Tibial artery (tissue), 4 donors: ENCODE measurements at regions of chr14 and their contacts with region 1.

Region 1: GRCh38 chr14:79534703-79535353 is 676.5 kb downstream of the DIO2 start:
- DNase-seq: no peak
- H3K4me3 ChIP-seq: no peak overlapping the region
- H3K27ac ChIP-seq: no peak overlapping the region
- H3K4me1 ChIP-seq: no peaks in the 10 kb centered on the region
- H3K27me3 ChIP-seq: no peaks in the 10 kb centered on the region
- CTCF ChIP-seq: no peak

Region 2: GRCh38 chr14:79256380-79256779 is 278.4 kb before region 1 on chr14:
- intact Hi-C with region 1: loop called (anchors 5 kb)
- DNase-seq: no peak
- H3K4me3 ChIP-seq: no peak overlapping the region
- H3K27ac ChIP-seq: no peak overlapping the region
- H3K4me1 ChIP-seq: no peaks in the 10 kb centered on the region
- H3K27me3 ChIP-seq: no peaks in the 10 kb centered on the region
- CTCF ChIP-seq: no peak

Region 3: DNA sequence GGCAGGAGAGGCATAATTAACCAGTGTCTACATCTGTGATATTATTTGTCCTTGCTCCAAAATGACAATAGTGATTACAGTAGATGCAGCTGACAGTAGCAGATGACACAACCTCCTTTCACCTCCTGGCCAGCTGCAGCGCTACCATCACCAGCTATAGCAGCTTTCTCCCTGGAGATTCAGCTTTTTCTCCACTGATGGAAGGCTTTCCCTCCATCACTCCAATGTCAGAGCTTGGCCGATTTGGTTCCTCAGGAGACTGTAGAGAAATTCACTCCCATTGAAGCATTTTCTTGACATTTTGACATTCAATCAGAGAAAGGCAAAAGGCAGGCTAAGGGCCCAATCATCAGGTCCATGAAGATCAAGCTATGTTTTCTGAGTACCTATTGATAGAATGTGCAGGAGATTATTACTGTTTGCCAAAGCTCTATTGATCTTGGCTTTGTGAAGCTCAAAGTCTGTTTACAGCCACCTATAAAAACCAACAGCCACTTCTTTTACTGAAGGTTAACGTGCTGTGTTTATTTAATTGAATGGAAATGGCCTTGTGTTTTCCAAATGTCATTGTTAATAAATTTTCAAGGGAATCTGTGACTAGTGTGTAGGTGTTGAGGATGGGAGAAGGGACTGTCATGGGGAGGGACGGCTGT is 108.6 kb before region 1 on chr14:
- intact Hi-C with region 1: no loop called
- DNase-seq: no peak
- H3K4me3 ChIP-seq: no peak overlapping the region
- H3K27ac ChIP-seq: no peak overlapping the region
- H3K4me1 ChIP-seq: no peaks in the 10 kb centered on the region
- H3K27me3 ChIP-seq: no peaks in the 10 kb centered on the region
- CTCF ChIP-seq: no peak

Region 4: GRCh38 chr14:79638672-79639266 is 103.9 kb after region 1 on chr14:
- intact Hi-C with region 1: no loop called
- DNase-seq: no peak
- H3K4me3 ChIP-seq: no peak overlapping the region
- H3K27ac ChIP-seq: no peak overlapping the region
- H3K4me1 ChIP-seq: no peaks in the 10 kb centered on the region
- H3K27me3 ChIP-seq: no peaks in the 10 kb centered on the region
- CTCF ChIP-seq: no peak